PC-3 (cell line): ENCODE measurements at regions of chr12 and their contacts with region 1.

Region 1: GRCh38 chr12:10190558-10191388 is 11.9 kb downstream of the TMEM52B start:
- DNase-seq: peak; percentile 82
- ATAC-seq: peak; percentile 77
- H3K4me3 ChIP-seq: no peak overlapping the region
- H3K27ac ChIP-seq: peak overlapping the region; percentile 66
- H3K4me1 ChIP-seq: peaks cover 41% of the 10 kb centered on the region
- H3K27me3 ChIP-seq: no peaks in the 10 kb centered on the region
- CTCF ChIP-seq: peak; percentile 78

Region 2: DNA sequence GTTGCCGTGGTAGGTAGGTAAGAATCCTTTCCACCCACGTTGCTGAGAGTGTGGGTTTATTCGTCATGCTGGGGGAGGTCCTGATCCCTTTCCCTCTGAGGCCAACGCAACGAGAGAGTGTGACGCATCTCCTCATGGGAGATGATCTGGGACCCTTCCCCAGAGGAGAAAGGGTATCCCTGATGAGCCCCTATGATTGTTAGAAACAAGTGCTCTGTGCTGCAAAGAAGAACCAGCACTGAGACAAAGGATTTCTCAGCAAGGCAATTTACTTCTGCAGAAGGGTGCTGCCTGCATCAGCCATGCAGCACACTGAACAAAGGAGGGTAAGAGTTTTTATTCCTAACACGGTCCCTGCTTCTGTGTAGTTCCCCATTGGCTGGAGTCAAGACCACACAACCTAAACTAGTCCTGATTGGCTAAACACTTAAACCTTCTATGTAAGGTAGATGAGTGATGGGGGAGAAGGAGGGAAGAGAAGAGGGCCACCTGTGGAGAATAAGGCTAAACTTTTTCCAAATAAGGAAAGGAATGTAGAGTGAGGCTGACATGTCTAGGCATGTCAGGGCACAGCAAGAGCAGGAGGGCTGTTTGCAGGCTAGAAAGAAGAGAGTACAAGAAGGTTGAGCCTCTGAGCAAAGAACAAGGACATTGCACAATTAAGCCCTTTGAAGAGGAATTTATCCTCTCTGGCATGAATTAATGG is 279.9 kb before region 1 on chr12:
- CTCF ChIA-PET with region 1: no interaction called
- POLR2A ChIA-PET with region 1: no interaction called
- intact Hi-C with region 1: no loop called
- DNase-seq: no peak
- ATAC-seq: no peak
- H3K4me3 ChIP-seq: no peak overlapping the region
- H3K27ac ChIP-seq: no peak overlapping the region
- H3K4me1 ChIP-seq: no peaks in the 10 kb centered on the region
- H3K27me3 ChIP-seq: peaks cover 15% of the 10 kb centered on the region; the same call in 1 of the 2 replicates
- CTCF ChIP-seq: no peak

Region 3: GRCh38 chr12:10153271-10154144 is 37.3 kb before region 1 on chr12:
- CTCF ChIA-PET with region 1: interaction called, 8 read pairs
- POLR2A ChIA-PET with region 1: no interaction called
- intact Hi-C with region 1: loop called (anchors 1 kb)
- DNase-seq: peak; percentile 75
- ATAC-seq: peak; percentile 79
- H3K4me3 ChIP-seq: peak overlapping the region; percentile 65
- H3K27ac ChIP-seq: no peak overlapping the region
- H3K4me1 ChIP-seq: no peaks in the 10 kb centered on the region
- H3K27me3 ChIP-seq: no peaks in the 10 kb centered on the region
- CTCF ChIP-seq: peak; percentile 73